T-cell (primary cell): ENCODE measurements at regions of chr6 and their contacts with region 1.

Region 1: DNA sequence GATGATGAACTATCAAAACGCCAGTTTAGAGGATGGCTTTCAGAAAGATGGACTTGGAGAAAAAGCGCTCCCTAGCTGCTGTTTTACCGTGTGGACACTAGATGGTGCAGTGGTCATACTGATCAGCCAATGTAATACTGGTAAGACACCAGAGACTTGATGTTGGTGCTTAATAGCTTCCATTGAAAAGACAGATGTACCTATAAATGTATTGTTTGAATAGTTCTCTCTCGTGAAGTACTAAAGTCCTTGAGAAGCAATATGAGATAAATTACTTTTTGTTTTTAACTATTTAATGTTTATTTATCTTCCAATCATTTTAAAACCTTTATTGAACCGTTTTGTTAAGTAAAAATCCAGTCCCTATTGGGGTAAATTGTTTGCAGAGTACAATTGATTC is 63.9 kb upstream of the FUCA2 start:
- DNase-seq: peak in 31 of 35 experiments; percentile 13 to 83 (median 41)
- ATAC-seq: peak; percentile 84 to 90 (median 88)
- H3K4me3 ChIP-seq: no peak overlapping the region
- H3K4me3 Mint-ChIP-seq: no peak overlapping the region
- H3K27ac ChIP-seq: no peak overlapping the region
- H3K27ac Mint-ChIP-seq: no peak overlapping the region
- H3K4me1 ChIP-seq: no peaks in the 10 kb centered on the region
- H3K4me1 Mint-ChIP-seq: peaks cover 0 to 26% (median 2%) of the 10 kb centered on the region in 3 donors
- H3K27me3 ChIP-seq: no peaks in the 10 kb centered on the region
- H3K27me3 Mint-ChIP-seq: no peaks in the 10 kb centered on the region

Region 2: DNA sequence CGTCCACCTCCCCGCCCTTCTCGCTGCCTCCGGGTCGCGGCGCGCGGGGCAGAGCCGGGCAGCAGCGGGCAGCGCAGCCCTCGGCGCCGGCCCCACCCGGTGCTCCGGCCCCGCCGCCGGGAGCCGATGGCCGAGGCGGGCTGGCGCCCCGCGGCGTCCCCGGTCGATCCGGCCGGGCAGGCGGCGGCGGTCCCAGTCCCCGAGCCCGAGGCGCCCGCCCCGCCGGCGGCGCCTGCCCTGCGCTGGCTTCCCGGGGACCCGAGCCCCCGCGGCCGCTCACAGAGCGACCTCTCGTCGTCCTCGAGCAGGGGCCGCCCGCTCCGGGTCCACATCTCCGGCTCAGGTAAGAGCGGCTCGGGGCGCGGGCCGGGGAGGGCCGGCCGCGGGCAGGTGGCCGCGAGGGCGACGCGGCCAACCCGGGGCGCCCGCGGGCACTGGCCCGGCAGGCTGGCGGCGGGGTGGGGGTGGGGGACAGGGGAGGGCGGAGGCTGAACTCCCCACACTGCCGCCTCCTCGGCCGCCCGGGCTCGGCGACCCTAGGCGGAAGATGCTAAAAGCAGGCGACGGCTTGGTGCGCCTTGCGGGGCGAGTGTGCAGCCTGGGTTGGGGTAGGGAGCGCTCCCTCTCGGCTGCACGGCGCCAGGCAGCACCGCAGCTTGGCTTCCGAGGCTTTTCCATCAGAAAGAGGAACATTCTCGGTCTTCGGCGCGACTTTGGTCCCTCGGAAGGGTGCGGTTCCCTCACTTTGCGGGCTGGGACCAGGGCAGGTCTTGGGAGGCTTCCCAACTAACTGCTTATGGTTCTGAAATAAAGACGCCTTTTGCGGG is 38.4 kb before region 1 on chr6:
- CTCF ChIA-PET with region 1: interaction called, 5 to 10 read pairs
- POLR2A ChIA-PET with region 1: no interaction called
- DNase-seq: peak in 34 of 35 experiments; percentile 28 to 76 (median 48)
- ATAC-seq: peak; percentile 69 to 82 (median 73)
- H3K4me3 ChIP-seq: peak overlapping the region; percentile 73 to 83
- H3K4me3 Mint-ChIP-seq: peak overlapping the region; percentile 81 to 89 (median 84)
- H3K27ac ChIP-seq: peak overlapping the region; percentile 79
- H3K27ac Mint-ChIP-seq: peak overlapping the region; percentile 86 to 92
- H3K4me1 ChIP-seq: peaks cover 0 to 51% of the 10 kb centered on the region in 2 experiments
- H3K4me1 Mint-ChIP-seq: peaks cover 40 to 59% (median 45%) of the 10 kb centered on the region in 3 donors
- H3K27me3 ChIP-seq: no peaks in the 10 kb centered on the region
- H3K27me3 Mint-ChIP-seq: no peaks in the 10 kb centered on the region

Region 3: DNA sequence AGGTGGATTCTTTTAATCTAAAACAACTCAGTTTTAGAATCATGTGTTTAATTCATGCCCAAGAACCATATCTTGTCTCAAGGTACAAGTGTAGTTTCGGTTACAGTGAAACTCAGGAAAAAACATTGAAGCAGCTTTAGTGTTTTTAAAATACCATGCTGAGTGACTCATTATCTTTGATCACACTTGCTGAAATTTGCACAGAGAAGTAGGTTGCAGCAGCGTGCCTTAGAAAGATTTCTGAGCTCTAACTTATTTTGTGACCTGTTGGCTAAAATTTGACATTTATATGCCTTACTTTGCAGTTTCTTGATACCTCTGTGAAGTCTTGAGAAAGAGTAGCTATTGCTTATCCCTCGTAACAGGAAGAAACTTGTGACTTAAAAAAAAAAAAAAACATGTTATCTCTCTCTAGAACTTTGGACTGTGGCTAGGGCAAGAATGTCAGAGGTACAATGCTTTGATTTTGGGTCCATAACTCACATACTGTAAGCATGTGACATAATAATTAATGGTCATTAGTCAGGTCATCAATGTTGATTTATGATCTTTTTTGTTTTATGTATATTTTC is 29.4 kb before region 1 on chr6:
- CTCF ChIA-PET with region 1: interaction called, 5 to 12 read pairs
- POLR2A ChIA-PET with region 1: no interaction called
- DNase-seq: peak in 1 of 35 experiments; percentile 54
- ATAC-seq: peak; percentile 64 to 82 (median 75)
- H3K4me3 ChIP-seq: no peak overlapping the region
- H3K4me3 Mint-ChIP-seq: peak overlapping the region; percentile 52 to 77 (median 66)
- H3K27ac ChIP-seq: peak overlapping the region; percentile 78
- H3K27ac Mint-ChIP-seq: peak overlapping the region; percentile 97 to 98
- H3K4me1 ChIP-seq: peaks cover 18 to 66% of the 10 kb centered on the region in 2 experiments
- H3K4me1 Mint-ChIP-seq: peaks cover 79 to 94% (median 83%) of the 10 kb centered on the region in 3 donors
- H3K27me3 ChIP-seq: no peaks in the 10 kb centered on the region
- H3K27me3 Mint-ChIP-seq: no peaks in the 10 kb centered on the region

Region 4: DNA sequence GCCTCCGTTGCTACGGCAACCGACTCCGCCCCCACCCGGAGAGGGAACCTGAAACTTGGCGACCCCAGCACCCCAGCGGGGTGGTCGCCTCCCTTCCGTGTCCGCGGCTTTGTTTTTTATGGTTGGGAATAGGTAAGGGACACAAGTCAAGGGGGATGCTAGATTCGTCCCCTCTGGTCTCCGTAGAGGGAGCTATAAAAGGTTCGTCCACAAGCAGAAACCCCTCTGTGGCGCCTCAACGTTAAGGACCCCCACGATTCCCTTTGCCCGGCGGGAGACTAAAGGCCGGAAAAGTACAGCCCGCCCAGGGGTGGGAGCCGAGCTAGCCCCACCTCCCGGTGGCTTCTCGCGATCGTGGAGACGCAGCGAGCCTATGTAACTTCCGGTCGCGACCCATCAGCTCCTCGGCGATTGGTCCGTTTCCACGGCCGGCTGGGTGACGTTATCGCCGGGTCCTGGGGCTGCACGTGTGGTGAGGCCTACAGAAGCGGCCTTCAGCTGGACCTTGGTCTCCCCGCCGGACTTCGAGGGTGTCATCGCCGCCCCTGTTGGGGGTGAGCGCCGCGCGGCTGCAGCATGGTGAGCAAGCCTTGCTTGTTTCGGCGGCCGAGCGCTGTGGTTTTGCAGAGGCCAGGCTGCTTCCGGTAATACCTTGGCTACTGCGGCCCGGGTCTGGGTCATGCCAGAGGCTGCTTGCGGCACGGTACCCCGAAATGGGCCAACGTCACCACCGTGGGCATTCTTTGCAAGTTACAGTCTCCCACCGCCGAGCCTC is 267.6 kb after region 1 on chr6 and contains the start of gene LTV1:
- CTCF ChIA-PET with region 1: interaction called in 1 of 2 experiments, 17 read pairs
- POLR2A ChIA-PET with region 1: no interaction called
- DNase-seq: peak; percentile 80 to 94 (median 88)
- ATAC-seq: peak; percentile 98 to 99 (median 98)
- H3K4me3 ChIP-seq: peak within 1 kb of the TSS; percentile 83 to 92
- H3K4me3 Mint-ChIP-seq: peak within 1 kb of the TSS; percentile 90 to 93 (median 91)
- H3K27ac ChIP-seq: peak within 1 kb of the TSS; percentile 96
- H3K27ac Mint-ChIP-seq: peak within 1 kb of the TSS; percentile 92 to 97
- H3K4me1 ChIP-seq: peaks cover 12 to 18% of the 10 kb centered on the region in 2 experiments
- H3K4me1 Mint-ChIP-seq: peaks cover 18 to 38% (median 31%) of the 10 kb centered on the region in 3 donors
- H3K27me3 ChIP-seq: no peaks in the 10 kb centered on the region
- H3K27me3 Mint-ChIP-seq: no peaks in the 10 kb centered on the region
- total RNA-seq, gene LTV1: 16.6 to 22.1 (median 20.3) TPM

Region 5: DNA sequence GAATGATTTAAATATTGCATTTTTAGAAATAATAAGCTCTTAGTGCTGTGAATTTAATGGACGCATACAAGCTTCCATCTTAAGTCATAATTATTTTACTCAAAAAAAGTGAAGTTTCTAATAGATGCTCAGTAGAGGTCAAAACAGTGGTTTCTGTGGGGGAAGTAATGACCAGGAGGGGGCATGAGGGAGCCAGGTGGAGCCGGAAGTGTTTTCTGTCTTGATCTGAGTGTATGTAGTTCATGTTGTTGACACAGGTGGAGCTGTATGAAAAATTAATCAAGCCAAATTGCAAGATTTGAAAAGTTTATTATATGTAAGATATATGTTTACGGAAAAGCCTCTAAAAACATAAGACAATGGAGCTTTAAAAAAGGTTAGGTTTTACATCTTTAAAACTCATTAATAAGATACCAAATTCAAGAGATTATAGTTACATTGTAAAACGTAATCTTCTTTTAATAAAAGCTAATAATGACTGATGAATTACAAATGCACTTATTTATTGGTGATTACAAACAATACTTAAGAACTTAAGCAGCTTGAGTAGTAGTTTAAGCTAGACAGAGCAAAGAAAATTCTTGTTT is 364.7 kb after region 1 on chr6:
- CTCF ChIA-PET with region 1: interaction called, 9 to 20 read pairs
- POLR2A ChIA-PET with region 1: no interaction called
- DNase-seq: peak; percentile 11 to 74 (median 45)
- ATAC-seq: peak; percentile 83 to 95 (median 89)
- H3K4me3 ChIP-seq: no peak overlapping the region
- H3K4me3 Mint-ChIP-seq: no peak overlapping the region
- H3K27ac ChIP-seq: no peak overlapping the region
- H3K27ac Mint-ChIP-seq: no peak overlapping the region
- H3K4me1 ChIP-seq: peaks cover 0 to 8% of the 10 kb centered on the region in 2 experiments
- H3K4me1 Mint-ChIP-seq: peaks cover 8 to 11% (median 10%) of the 10 kb centered on the region in 3 donors
- H3K27me3 ChIP-seq: peaks cover 0 to 2% of the 10 kb centered on the region in 2 experiments
- H3K27me3 Mint-ChIP-seq: no peaks in the 10 kb centered on the region

Region 6: DNA sequence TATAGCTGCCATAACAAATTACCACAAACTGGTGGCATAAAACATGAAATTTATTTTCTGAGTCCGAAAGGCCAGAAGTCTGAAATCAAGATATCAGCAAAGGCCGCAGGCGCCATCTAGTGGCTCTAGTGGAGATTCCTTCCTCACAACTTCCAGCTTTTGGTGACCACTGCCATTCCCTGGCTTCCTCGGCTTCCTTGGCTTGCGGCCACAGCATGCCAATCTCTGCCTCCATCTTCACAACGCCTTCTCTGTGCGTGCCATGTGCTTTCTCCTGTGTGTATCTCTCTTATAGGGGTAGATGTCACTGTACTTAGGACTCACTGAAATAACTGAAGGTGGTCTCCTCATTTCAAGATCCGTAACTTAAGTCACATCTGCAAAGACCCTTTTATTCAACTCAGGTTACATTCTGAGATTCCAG is 438.1 kb after region 1 on chr6:
- CTCF ChIA-PET with region 1: interaction called, 18 to 32 read pairs
- POLR2A ChIA-PET with region 1: no interaction called
- DNase-seq: peak in 33 of 35 experiments; percentile 12 to 80 (median 47)
- ATAC-seq: no peak
- H3K4me3 ChIP-seq: no peak overlapping the region
- H3K4me3 Mint-ChIP-seq: no peak overlapping the region
- H3K27ac ChIP-seq: no peak overlapping the region
- H3K27ac Mint-ChIP-seq: no peak overlapping the region
- H3K4me1 ChIP-seq: peaks cover 0 to 2% of the 10 kb centered on the region in 2 experiments
- H3K4me1 Mint-ChIP-seq: peaks cover 0 to 6% (median 0%) of the 10 kb centered on the region in 3 donors
- H3K27me3 ChIP-seq: peaks cover 0 to 2% of the 10 kb centered on the region in 2 experiments
- H3K27me3 Mint-ChIP-seq: peaks cover 8 to 16% of the 10 kb centered on the region in 2 donors